Kidney (tissue), 22 donors: ENCODE measurements at regions of chr15 and their contacts with region 1.

Region 1: DNA sequence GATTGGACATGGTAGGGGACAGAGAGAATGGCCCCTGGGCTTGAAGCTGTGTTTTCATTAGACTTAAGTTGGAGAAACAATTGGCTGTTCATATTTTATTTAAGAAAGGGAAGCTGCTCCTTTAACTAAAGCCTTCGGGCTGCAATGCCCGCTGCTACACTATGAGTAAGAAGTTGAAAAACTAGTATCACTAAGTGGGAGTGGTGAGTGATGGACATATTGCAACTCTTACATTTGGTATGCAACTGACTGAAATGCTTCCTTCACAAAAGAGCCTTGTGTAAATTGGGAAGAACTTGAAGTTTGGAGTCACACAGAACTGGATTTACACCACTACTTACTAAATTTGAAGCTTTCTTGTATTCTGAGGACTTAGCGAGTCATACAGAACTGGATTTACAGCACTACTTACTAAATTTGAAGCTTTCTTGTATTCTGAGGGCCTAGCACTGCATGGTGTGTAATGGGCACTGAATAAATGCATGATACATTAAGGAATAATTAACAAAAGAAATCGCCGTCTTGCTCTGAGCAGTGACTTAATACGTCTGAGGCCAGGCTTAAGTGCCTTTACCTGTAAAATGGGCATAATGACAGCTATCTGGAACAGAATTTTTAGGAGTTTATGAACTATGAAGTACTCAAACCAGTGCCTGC is 149.5 kb downstream of the RYR3 start:
- DNase-seq: no peak
- H3K4me3 ChIP-seq: no peak overlapping the region
- H3K27ac ChIP-seq: no peak overlapping the region
- H3K4me1 ChIP-seq: peaks cover 0 to 13% (median 0%) of the 10 kb centered on the region in 3 donors
- H3K27me3 ChIP-seq: no peaks in the 10 kb centered on the region
- CTCF ChIP-seq: no peak

Region 2: GRCh38 chr15:33526532-33526931 is 66.3 kb after region 1 on chr15:
- intact Hi-C with region 1: loop called (anchors 10 kb)
- DNase-seq: no peak
- H3K4me3 ChIP-seq: no peak overlapping the region
- H3K27ac ChIP-seq: no peak overlapping the region
- H3K4me1 ChIP-seq: no peaks in the 10 kb centered on the region
- H3K27me3 ChIP-seq: no peaks in the 10 kb centered on the region
- CTCF ChIP-seq: no peak

Region 3: GRCh38 chr15:33801954-33802353 is 341.7 kb after region 1 on chr15:
- intact Hi-C with region 1: no loop called
- DNase-seq: peak in 1 of 5 donors; percentile 6
- H3K4me3 ChIP-seq: no peak overlapping the region
- H3K27ac ChIP-seq: no peak overlapping the region
- H3K4me1 ChIP-seq: no peaks in the 10 kb centered on the region
- H3K27me3 ChIP-seq: no peaks in the 10 kb centered on the region
- CTCF ChIP-seq: no peak